ENCODE measurements at regions of chr22 and their contacts with region 1.

Region 1: DNA sequence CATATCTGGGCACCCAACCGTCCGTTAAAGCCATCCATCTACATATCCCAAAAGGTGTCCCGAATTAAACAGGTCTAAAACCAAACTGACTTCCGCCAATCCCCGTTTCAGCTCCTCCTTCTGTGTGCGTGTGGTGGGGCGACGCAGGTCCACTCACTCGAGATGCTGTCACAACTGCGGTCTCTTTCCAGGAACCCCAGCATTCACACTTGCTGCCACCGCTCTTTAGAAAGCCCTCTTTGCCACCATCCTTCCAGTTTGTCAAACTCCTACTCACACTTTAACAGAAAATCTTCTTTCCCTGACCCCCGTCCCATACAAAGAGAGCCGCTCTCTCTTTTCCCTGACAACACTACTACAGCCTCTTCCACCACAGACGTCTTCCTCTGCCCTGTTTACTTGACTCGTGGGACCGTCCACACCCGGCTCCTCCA is 467 bp downstream of the ESS2 start:
- DNase-seq: no peak
- H3K4me3 ChIP-seq: peak overlapping the region; percentile 71
- H3K27ac ChIP-seq: peak overlapping the region; percentile 59
- H3K4me1 ChIP-seq: peaks cover 6% of the 10 kb centered on the region
- H3K27me3 ChIP-seq: peaks cover 9% of the 10 kb centered on the region
- CTCF ChIP-seq: no peak

Region 2: DNA sequence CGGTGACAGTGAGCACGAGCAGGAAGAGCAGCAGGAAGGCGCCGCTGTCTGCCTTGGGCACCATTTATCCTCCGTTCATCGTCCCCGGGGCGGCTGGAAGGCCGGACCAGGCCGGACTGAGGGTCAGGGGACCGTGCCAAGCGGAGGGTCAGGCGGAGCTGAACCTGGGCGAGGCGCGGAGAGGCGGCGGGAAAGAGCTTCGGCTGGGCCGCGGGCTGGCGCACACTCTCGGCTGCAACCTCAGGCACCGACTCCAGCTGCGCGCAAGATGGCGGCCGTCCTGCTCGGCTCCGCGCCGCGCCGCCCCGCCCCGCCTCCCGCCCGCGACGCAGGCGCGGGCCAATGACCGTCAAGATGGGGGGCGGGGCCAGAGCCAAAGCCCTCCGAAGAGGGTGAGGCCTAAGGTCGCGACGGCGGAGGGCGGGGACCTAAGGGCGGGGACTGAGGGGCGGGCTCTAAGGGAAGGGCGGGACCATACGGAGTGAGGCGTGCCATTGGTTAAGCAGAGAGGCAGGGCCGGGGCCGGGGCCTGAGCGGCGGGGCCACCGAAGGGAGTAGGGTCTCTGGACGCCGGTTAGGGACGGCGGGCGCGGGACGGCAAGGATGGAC is 21.7 kb before region 1 on chr22 and contains the start of gene DGCR2:
- intact Hi-C with region 1: loop called (anchors 2 kb)
- DNase-seq: peak; percentile 98
- H3K4me3 ChIP-seq: peak within 1 kb of the TSS; percentile 92
- H3K27ac ChIP-seq: peak within 1 kb of the TSS; percentile 91
- H3K4me1 ChIP-seq: peaks cover 21% of the 10 kb centered on the region
- H3K27me3 ChIP-seq: no peaks in the 10 kb centered on the region
- CTCF ChIP-seq: no peak
- total RNA-seq, gene DGCR2: 71.6 to 82.5 TPM